Ovary (tissue), 10 donors: ENCODE measurements at regions of chr19 and their contacts with region 1.

Region 1: DNA sequence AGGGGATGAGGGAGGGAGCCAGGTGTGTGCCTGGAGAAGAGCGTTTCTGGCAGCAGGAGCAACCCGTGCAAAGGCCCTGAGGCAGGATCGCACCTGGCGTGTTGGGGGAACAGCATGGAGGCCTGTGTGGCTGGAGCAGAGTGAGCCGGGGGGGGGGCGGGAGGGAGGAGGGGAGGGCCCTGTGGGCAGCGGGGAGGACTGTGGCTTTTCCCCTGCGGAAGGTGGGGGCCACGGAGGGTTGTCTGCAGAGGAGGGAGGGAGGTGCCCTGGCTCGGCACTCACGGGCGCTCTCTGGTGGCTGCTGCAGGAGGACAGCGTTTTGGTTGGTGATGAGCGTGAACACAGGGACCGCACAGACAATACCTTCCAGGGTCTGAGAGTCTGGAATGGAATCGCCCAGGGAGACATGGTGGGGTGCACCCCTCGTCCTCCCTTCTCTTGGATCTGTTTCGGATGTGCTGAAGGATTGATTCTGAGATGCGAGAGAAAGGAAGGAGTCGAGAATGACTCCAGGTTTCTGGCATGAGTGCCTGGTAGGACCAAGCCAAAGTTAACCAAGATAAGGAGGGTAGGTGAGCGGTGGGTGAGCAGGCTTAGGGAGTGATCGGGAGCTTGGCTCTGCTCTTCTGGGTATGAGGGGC is 6.5 kb downstream of the RAB11B start:
- DNase-seq: peak; percentile 54 to 75 (median 67)
- H3K4me3 ChIP-seq: no peak overlapping the region
- H3K27ac ChIP-seq: peak overlapping the region in 1 of 2 donors; percentile 31
- H3K4me1 ChIP-seq: peaks cover 22% of the 10 kb centered on the region
- H3K27me3 ChIP-seq: no peaks in the 10 kb centered on the region
- CTCF ChIP-seq: peak; percentile 10 to 43 (median 18)
- EP300 ChIP-seq: no peak
- POLR2A ChIP-seq: no peak

Region 2: DNA sequence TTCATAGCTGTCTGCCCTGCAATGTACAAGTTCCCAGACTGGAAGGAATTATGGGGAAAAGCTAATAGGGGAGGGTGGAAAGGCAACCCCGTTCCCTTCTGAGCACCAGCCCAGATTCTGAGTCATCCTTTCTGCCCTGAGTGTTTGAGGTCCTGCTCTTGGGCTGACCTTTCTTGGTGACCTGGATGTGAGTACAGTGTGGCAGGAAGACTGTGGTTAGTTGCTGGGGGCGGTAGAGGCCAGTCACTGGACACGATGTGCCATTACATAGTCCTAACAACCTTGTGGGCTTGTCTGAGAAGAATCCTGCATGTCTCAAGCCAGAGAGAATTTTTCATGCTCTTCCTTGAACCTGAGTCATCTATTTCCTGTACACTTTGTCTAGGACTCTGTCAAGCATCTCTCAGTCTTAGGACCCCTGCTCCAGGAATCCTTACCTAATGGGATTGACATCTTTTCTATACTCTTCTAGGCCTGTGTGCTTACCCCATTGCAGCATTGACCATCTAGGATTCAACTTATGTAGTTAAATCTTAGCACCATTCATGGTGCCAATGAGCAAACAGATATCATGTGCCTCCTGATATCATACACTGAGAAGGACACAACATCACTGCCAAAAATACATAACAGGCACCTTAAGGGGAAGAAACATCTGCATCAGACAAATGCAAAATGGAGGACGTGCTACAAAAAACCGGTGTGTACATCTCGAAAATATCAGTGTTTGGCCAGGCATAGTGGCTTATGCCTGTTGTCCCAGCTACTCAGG is 40.9 kb before region 1 on chr19:
- intact Hi-C with region 1: loop called in 3 of 4 experiments (anchors 2 to 5 kb)
- DNase-seq: no peak
- H3K4me3 ChIP-seq: no peak overlapping the region
- H3K27ac ChIP-seq: no peak overlapping the region
- H3K4me1 ChIP-seq: peaks cover 2% of the 10 kb centered on the region
- H3K27me3 ChIP-seq: no peaks in the 10 kb centered on the region
- CTCF ChIP-seq: no peak
- EP300 ChIP-seq: no peak
- POLR2A ChIP-seq: no peak

Region 3: DNA sequence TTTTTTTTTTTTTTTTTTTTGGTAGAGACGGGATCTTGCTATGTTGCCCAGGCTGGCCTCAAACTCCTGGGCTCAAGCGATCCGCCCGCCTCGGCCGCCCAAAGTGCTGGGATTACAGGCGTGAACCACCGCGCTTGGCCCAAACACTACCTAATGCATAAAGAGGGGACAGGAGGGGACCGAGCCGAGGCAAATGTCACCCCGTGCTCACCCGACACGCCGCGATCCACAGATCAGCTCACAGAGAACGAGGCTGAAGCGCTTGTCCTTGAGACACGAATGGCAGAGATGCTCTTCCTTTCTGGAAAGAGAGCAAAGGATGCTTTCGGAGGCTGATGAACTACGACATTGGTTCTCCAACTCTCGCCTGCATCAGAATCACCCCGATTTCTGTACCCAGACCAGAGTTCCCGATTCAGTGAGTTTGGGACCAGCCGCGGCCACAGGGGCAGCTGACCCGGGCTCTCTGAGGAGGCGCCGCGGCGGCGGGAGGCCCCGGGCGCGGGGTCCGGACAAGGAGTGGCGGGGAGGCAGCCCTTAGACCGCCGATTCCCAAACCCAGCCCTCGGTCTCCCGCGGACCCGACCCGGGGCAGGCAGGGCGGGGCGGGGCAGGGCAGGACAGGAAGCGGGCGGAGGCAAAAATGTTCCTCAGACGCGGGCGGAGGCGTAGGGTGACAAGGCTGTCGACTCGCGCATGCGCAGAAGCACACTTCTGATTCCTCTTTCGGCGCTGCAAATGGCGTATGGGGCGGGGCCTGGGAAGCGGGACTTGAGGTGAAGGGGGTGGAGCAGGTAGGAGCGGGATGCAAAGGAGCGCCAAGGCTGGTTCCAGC is 912.7 kb after region 1 on chr19 and contains the start of gene ZNF699:
- intact Hi-C with region 1: loop called in 1 of 4 experiments (anchors 5 kb)
- DNase-seq: peak; percentile 98 to 99 (median 99)
- H3K4me3 ChIP-seq: peak within 1 kb of the TSS; percentile 97
- H3K27ac ChIP-seq: peak within 1 kb of the TSS; percentile 72 to 90
- H3K4me1 ChIP-seq: peaks cover 1% of the 10 kb centered on the region
- H3K27me3 ChIP-seq: no peaks in the 10 kb centered on the region
- CTCF ChIP-seq: no peak
- EP300 ChIP-seq: no peak
- POLR2A ChIP-seq: peak; percentile 47
- total RNA-seq, gene ZNF699: 9.2 to 31.2 (median 14.2) TPM